Activated CD4-positive, alpha-beta T cell treated with anti-CD3 and anti-CD28 coated beads for 36 hours (primary cell): ENCODE measurements at regions of chr1 and their contacts with region 1.

Region 1: GRCh38 chr1:166166695-166167571 is at the start of gene FAM78B:
- DNase-seq: peak; percentile 74
- ATAC-seq: peak; percentile 35
- H3K4me3 Mint-ChIP-seq: peak within 1 kb of the TSS; percentile 69
- H3K27ac Mint-ChIP-seq: no peak within 1 kb of the TSS
- H3K4me1 Mint-ChIP-seq: peaks cover 29% of the 10 kb centered on the region
- H3K27me3 Mint-ChIP-seq: peaks cover 31% of the 10 kb centered on the region
- total RNA-seq, gene FAM78B: 0.34 to 0.51 TPM

Region 2: GRCh38 chr1:165827268-165828102 is 339.4 kb before region 1 on chr1 and contains the start of gene UCK2:
- CTCF ChIA-PET with region 1: no interaction called
- POLR2A ChIA-PET with region 1: no interaction called
- intact Hi-C with region 1: loop called in 1 of 2 experiments (anchors 5 kb)
- DNase-seq: peak; percentile 83
- ATAC-seq: peak; percentile 76
- H3K4me3 Mint-ChIP-seq: peak within 1 kb of the TSS; percentile 96
- H3K27ac Mint-ChIP-seq: peak within 1 kb of the TSS; percentile 92
- H3K4me1 Mint-ChIP-seq: peaks cover 13% of the 10 kb centered on the region
- H3K27me3 Mint-ChIP-seq: no peaks in the 10 kb centered on the region
- total RNA-seq, gene UCK2: 69.4 to 81.5 TPM

Region 3: DNA sequence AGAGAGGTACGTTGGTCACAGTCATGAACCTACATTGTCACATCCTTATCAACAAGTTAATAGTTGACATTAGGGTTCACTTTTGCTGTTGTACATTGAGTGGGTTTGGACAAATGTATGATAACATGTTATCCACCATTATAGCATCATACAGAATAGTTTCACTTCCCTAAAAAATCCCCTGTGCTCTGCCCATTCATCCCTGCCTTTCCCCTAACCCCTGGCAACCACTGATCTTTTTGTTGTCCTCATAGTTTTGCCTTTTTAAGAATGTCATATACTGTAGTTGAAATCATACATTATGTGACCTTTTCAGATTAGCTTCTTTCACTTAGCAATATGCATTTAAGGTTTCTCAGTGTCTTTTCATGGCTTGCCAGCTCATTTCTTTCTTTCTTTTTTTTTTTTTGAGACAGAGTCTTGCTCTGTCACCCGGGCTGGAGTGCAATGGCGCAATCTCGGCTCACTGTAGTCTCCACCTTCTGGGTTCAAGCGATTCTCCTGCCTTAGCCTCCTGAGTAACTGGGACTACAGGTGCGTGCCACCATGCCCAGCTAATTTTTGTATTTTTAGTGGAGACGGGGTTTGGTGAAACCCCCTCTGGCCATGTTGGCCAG is 288.9 kb before region 1 on chr1:
- CTCF ChIA-PET with region 1: no interaction called
- POLR2A ChIA-PET with region 1: no interaction called
- intact Hi-C with region 1: no loop called
- DNase-seq: peak; percentile 19
- ATAC-seq: peak; percentile 79
- H3K4me3 Mint-ChIP-seq: no peak overlapping the region
- H3K27ac Mint-ChIP-seq: no peak overlapping the region
- H3K4me1 Mint-ChIP-seq: peaks cover 49% of the 10 kb centered on the region
- H3K27me3 Mint-ChIP-seq: no peaks in the 10 kb centered on the region

Region 4: GRCh38 chr1:165928075-165928731 is 238.7 kb before region 1 on chr1:
- CTCF ChIA-PET with region 1: interaction called, 3 read pairs
- POLR2A ChIA-PET with region 1: interaction called, 3 read pairs
- intact Hi-C with region 1: loop called (anchors 2 to 10 kb)
- DNase-seq: peak; percentile 73
- ATAC-seq: peak; percentile 84
- H3K4me3 Mint-ChIP-seq: no peak overlapping the region
- H3K27ac Mint-ChIP-seq: no peak overlapping the region
- H3K4me1 Mint-ChIP-seq: no peaks in the 10 kb centered on the region
- H3K27me3 Mint-ChIP-seq: peaks cover 8% of the 10 kb centered on the region

Region 5: GRCh38 chr1:166083887-166084286 is 83.0 kb before region 1 on chr1:
- CTCF ChIA-PET with region 1: interaction called, 4 read pairs
- POLR2A ChIA-PET with region 1: no interaction called
- intact Hi-C with region 1: loop called (anchors 5 kb)
- DNase-seq: peak; percentile 40
- ATAC-seq: peak; percentile 86
- H3K4me3 Mint-ChIP-seq: no peak overlapping the region
- H3K27ac Mint-ChIP-seq: no peak overlapping the region
- H3K4me1 Mint-ChIP-seq: peaks cover 31% of the 10 kb centered on the region
- H3K27me3 Mint-ChIP-seq: no peaks in the 10 kb centered on the region

Region 6: DNA sequence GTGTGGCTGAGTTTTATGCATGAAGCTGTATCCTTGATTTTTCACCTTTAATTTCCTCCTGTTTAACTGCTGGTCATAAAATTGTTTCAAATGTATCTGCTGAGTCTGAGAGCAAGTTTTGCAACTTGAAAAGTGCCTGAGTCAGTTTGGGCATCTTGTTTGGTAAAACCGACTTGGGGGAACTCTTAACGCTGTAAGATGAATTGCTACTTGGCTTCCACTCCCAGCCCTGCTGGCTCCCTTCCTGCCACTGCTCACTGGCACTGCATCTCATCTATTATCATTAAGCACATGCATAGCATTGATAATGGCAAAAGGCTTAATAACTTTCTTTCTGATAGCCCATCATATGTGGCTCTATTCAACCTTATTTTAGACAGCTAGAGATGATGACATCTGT is 35.6 kb after region 1 on chr1:
- CTCF ChIA-PET with region 1: no interaction called
- POLR2A ChIA-PET with region 1: no interaction called
- intact Hi-C with region 1: no loop called
- DNase-seq: no peak
- ATAC-seq: no peak
- H3K4me3 Mint-ChIP-seq: no peak overlapping the region
- H3K27ac Mint-ChIP-seq: no peak overlapping the region
- H3K4me1 Mint-ChIP-seq: no peaks in the 10 kb centered on the region
- H3K27me3 Mint-ChIP-seq: peaks cover 7% of the 10 kb centered on the region

Region 7: DNA sequence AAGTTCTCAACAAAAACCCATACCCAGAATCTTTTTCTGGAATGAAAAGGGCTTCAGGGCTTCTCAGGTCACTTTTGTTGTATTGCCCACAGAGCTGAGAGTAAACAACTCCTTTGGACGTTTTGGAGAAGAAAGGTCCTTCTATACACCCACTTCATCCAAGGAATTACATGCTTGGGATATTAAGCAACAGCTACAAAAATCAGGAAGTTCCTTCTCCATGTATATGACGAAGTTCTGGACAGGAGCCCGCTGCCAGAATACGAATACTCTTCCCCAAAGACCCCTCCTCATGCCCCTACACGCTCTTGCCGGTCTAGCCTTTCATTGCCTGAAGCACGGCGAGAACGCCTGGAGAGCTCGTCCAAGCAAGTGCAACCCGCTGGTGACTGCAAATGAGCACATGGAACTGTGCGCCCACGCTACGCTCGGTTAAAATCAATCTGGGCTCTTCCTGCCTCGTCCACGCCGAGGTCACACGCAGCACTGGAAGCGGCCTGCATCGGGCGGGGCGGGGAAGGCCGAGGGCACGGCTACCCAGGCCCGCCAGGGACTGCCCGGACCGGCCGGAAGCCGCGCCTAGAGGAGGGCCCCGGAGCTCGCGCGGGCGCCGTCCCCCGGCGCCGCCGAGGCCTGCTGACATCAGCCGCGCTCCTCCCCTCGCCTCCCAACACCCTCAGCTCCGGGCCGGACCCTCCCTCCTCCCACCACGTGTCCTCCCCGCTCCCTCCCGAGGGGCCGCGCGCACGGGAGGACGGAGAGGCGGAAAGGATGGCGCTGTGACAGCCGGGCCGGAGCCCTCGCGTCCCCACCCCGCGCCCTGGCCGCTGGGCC is 672.0 kb after region 1 on chr1 and contains the start of gene POGK:
- CTCF ChIA-PET with region 1: no interaction called
- POLR2A ChIA-PET with region 1: no interaction called
- intact Hi-C with region 1: loop called in 1 of 2 experiments (anchors 2 kb)
- DNase-seq: peak; percentile 93
- ATAC-seq: peak; percentile 97
- H3K4me3 Mint-ChIP-seq: peak within 1 kb of the TSS; percentile 90
- H3K27ac Mint-ChIP-seq: peak within 1 kb of the TSS; percentile 98
- H3K4me1 Mint-ChIP-seq: peaks cover 56% of the 10 kb centered on the region
- H3K27me3 Mint-ChIP-seq: no peaks in the 10 kb centered on the region
- total RNA-seq, gene POGK: 36.2 to 40.6 TPM